Psoas muscle (tissue), 8 donors: ENCODE measurements at regions of chr7 and their contacts with region 1.

Region 1: GRCh38 chr7:101237206-101238067 is at the start of gene CLDN15:
- DNase-seq: peak; percentile 89 to 91
- ATAC-seq: peak; percentile 23 to 68 (median 60)
- H3K4me3 ChIP-seq: peak within 1 kb of the TSS; percentile 28
- H3K27ac ChIP-seq: peak within 1 kb of the TSS; percentile 58
- H3K4me1 ChIP-seq: peaks cover 24% of the 10 kb centered on the region
- H3K27me3 ChIP-seq: no peaks in the 10 kb centered on the region
- CTCF ChIP-seq: no peak
- total RNA-seq, gene CLDN15: 1.0 to 2.1 (median 1.5) TPM

Region 2: DNA sequence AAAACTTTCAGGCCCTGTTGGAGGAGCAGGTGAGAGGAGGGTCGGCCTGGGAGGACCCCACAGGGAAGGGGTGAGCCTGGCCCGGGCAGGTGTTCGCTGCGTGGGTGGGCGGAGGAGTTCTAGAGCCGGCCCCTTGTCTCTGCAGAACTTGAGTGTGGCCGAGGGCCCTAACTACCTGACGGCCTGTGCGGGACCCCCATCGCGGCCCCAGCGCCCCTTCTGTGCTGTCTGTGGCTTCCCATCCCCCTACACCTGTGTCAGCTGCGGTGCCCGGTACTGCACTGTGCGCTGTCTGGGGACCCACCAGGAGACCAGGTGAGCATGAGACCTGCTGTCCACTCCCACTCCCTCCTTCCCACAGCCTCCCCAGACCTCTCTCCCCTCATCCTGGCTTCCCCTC is 13.9 kb before region 1 on chr7:
- intact Hi-C with region 1: loop called in 1 of 2 experiments (anchors 2 kb)
- DNase-seq: no peak
- ATAC-seq: no peak
- H3K4me3 ChIP-seq: no peak overlapping the region
- H3K27ac ChIP-seq: no peak overlapping the region
- H3K4me1 ChIP-seq: peaks cover 19% of the 10 kb centered on the region
- H3K27me3 ChIP-seq: no peaks in the 10 kb centered on the region
- CTCF ChIP-seq: no peak